ENCODE measurements at regions of chr12 and their contacts with region 1.

Region 1: GRCh38 chr12:91109148-91109564 is 2.1 kb downstream of the LUM start:
- DNase-seq: peak; percentile 61 to 77 (median 72)
- H3K4me3 ChIP-seq: no peak overlapping the region
- H3K27ac ChIP-seq: no peak overlapping the region
- H3K4me1 ChIP-seq: peaks cover 0 to 7% (median 1%) of the 10 kb centered on the region in 4 experiments
- H3K27me3 ChIP-seq: no peaks in the 10 kb centered on the region

Region 2: DNA sequence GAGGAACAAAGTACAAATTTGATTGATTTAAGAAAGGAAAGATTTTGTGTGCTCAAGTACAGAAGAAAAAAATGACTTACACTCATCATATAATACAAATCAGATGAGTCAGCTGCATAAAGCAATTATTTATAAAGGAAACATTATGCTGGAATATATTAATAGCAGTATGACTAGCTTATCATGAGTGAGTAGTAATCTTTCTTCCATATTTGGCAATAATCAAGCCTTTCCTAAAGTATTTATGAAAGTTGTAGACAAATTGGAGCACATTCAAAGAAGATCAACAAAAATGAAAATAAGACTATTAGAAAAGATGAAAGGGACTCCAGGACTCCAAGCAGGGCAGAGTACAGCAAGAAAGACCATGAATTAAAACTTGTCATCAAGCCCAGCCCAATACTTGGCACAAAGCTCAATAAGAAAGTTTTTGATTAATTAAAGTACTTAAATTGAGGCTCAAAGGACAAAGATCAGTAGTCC is 187.0 kb before region 1 on chr12:
- CTCF ChIA-PET with region 1: no interaction called
- POLR2A ChIA-PET with region 1: no interaction called
- DNase-seq: no peak
- H3K4me3 ChIP-seq: no peak overlapping the region
- H3K27ac ChIP-seq: no peak overlapping the region
- H3K4me1 ChIP-seq: no peaks in the 10 kb centered on the region
- H3K27me3 ChIP-seq: no peaks in the 10 kb centered on the region

Region 3: GRCh38 chr12:90978117-90978770 is 130.9 kb before region 1 on chr12:
- CTCF ChIA-PET with region 1: interaction called, 96 read pairs
- POLR2A ChIA-PET with region 1: interaction called, 4 read pairs
- DNase-seq: peak; percentile 47 to 76 (median 76)
- H3K4me3 ChIP-seq: no peak overlapping the region
- H3K27ac ChIP-seq: no peak overlapping the region
- H3K4me1 ChIP-seq: no peaks in the 10 kb centered on the region
- H3K27me3 ChIP-seq: no peaks in the 10 kb centered on the region

Region 4: GRCh38 chr12:90987520-90987919 is 121.6 kb before region 1 on chr12:
- CTCF ChIA-PET with region 1: interaction called, 12 read pairs
- POLR2A ChIA-PET with region 1: interaction called, 4 read pairs
- DNase-seq: no peak
- H3K4me3 ChIP-seq: no peak overlapping the region
- H3K27ac ChIP-seq: no peak overlapping the region
- H3K4me1 ChIP-seq: no peaks in the 10 kb centered on the region
- H3K27me3 ChIP-seq: no peaks in the 10 kb centered on the region

Region 5: GRCh38 chr12:90995010-90995409 is 114.1 kb before region 1 on chr12:
- CTCF ChIA-PET with region 1: interaction called, 10 read pairs
- POLR2A ChIA-PET with region 1: interaction called, 4 read pairs
- DNase-seq: no peak
- H3K4me3 ChIP-seq: no peak overlapping the region
- H3K27ac ChIP-seq: no peak overlapping the region
- H3K4me1 ChIP-seq: no peaks in the 10 kb centered on the region
- H3K27me3 ChIP-seq: no peaks in the 10 kb centered on the region

Region 6: GRCh38 chr12:91061091-91061490 is 48.1 kb before region 1 on chr12:
- CTCF ChIA-PET with region 1: interaction called, 10 read pairs
- POLR2A ChIA-PET with region 1: no interaction called
- DNase-seq: no peak
- H3K4me3 ChIP-seq: no peak overlapping the region
- H3K27ac ChIP-seq: no peak overlapping the region
- H3K4me1 ChIP-seq: no peaks in the 10 kb centered on the region
- H3K27me3 ChIP-seq: no peaks in the 10 kb centered on the region

Region 7: DNA sequence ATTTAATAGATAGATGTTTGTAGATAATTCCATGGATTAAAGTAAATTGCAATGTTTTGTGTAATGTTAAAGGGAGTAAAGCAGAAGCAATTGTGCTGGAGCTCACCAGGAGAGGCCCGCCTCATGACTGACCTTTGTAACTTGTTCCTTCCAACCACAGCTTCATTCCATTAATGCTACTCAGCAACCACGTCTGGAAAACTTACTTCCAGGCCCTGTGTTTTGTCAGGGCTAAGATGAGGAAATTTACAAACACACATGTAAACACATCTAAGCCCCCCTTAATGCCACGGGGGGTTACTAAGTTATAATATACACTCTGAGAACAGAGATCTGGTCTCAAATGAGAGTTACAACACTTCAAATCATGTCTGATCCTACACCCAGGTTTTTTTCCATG is 10.2 kb before region 1 on chr12:
- CTCF ChIA-PET with region 1: interaction called, 14 read pairs
- POLR2A ChIA-PET with region 1: no interaction called
- DNase-seq: no peak
- H3K4me3 ChIP-seq: no peak overlapping the region
- H3K27ac ChIP-seq: no peak overlapping the region
- H3K4me1 ChIP-seq: peaks cover 0 to 10% (median 4%) of the 10 kb centered on the region in 4 experiments
- H3K27me3 ChIP-seq: no peaks in the 10 kb centered on the region

Region 8: GRCh38 chr12:91194500-91194899 is 85.3 kb after region 1 on chr12:
- CTCF ChIA-PET with region 1: no interaction called
- POLR2A ChIA-PET with region 1: no interaction called
- DNase-seq: no peak
- H3K4me3 ChIP-seq: no peak overlapping the region
- H3K27ac ChIP-seq: no peak overlapping the region
- H3K4me1 ChIP-seq: peaks cover 0 to 2% (median 0%) of the 10 kb centered on the region in 4 experiments
- H3K27me3 ChIP-seq: no peaks in the 10 kb centered on the region